HEK293T (cell line): ENCODE measurements at regions of chr20 and their contacts with region 1.

Region 1: DNA sequence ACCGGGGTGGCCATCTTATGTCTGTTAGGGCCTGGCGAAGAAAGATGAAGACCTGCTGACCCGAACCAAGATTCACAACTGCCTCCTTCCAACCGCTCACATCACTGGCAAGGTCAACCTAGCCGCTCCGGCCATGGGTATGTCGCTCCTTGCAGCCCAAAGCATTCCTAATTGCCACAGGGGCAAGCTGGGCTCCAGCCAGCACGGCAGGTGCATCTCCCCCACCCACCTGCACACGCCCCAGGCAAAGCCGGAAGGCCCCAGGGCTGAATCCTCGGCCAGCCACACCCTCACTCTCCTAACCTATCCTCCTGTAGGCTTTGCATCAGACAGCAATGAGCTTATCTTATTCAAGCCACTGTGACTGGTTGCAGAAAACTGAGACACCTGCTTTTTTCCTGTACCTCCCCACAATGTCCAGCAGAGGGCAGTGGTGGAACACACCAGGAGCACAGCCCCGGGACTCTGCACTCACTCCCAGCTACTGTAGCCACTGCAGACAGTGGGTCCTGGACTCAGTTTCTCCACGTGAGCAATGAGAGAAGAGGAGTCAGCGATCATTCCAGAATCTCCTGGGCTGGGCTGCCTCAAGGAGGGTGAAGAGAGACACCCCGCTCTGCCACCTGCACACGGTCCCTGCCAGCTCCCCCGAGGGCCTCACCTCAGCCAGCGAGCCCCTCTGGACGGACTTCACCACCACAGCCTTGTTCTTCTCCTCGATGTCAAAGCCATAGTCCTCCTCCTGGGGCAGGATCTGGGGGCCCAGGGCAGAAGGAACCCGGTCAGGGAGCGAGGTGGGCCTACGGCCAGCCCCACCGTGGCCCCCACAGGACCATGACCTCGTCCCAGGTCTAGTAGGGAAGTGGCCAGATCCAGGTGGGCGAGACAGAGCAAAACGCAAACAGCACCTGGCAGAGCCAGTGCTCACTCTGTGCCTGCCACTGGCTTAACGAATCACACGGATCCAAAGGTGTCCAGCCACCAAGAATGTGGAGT is 170.0 kb downstream of the PREX1 start:
- DNase-seq: peak; percentile 86

Region 2: GRCh38 chr20:48904365-48905296 is 246.9 kb after region 1 on chr20:
- CTCF ChIA-PET with region 1: interaction called, 26 read pairs
- POLR2A ChIA-PET with region 1: interaction called, 5 read pairs
- DNase-seq: peak; percentile 70